Esophagus squamous epithelium (tissue), 5 donors: ENCODE measurements at regions of chr9 and their contacts with region 1.

Region 1: DNA sequence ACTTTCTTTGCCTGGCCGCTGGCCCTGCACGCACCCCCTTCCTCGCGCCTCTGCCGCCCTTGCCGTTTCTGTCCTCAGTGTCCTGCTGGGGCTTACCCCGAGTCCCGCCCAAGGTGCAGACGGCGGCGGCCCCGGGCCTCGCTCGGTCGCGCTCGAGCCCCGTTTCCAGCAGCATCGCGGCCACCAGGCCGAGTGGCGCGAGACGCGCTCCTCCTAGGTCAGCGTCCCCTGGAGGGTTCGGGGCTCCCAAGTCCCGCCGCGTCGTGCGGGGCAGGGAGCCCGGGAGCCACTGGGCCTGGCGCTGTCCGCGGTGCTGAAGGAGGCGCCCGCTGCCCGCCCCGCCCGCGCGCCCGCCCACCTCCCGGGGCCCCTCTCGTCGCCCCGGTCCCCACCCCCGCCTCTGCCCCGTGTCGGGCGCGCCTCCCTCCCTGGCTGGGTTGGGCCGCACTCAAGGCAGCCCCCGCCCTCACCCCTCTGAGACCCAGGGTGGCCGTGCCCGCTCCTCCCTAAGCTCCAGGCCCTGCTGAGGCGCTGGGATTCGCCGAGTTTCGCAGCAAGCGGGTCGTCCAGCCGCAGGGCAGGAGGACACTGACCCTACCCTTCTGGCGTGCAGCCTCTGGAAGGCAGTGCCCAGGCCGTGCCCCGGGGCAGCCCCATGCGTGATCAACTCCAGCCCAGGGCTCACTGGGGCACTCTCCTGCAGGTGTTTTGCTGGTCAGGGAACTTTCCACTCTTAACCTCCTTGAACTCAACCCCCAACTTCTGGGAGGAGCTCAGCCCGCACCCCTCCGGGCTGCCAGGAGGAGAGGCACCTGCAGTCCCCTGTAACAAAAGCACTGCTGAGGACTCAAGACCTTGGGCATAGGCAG is at the start of gene LHX3:
- DNase-seq: no peak
- H3K4me3 ChIP-seq: no peak within 1 kb of the TSS
- H3K27ac ChIP-seq: no peak within 1 kb of the TSS
- H3K4me1 ChIP-seq: peaks cover 0 to 23% (median 0%) of the 10 kb centered on the region in 3 donors
- H3K27me3 ChIP-seq: peaks cover 28 to 61% (median 41%) of the 10 kb centered on the region in 4 donors
- CTCF ChIP-seq: no peak
- POLR2A ChIP-seq: no peak
- total RNA-seq, gene LHX3: not detected

Region 2: DNA sequence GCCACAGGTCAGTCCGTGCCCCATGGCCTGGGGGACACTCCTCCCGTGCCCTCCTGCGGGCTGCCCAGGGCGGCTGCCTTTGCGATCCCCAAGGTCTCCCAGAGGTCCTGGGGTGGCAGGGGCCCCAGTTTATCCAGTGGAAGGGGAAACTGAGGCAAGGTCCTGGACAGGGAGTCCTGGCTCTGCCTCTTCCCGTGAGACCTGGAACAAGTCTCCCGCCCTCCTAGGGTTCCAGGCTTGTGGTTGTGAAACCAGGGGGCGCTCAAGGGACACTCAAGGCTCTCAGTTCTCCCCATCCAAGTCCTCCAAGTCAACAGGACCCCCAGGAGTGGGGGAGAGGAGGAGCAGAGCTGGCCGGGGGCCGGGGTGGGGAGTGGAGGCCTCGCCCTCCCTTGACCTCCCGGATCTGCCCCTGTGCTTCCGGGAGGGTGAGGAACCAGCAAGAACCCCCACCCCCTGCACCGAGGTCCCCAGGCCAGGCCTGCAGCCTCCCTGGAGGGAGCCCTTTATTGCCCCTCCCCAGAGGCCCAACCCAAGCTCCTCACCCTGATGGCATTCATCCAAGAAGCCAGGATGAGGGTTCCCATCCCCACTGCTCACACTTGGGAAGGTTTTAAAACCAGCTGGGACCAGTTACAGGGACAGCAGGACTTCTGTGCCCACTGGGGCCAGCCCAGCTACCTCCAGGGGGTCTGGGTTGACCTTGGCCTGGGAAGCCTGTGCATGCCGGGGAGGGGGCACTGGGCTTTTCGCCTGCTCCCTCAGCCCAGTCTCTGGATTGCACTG is 61.7 kb before region 1 on chr9:
- intact Hi-C with region 1: loop called (anchors 10 kb)
- DNase-seq: no peak
- H3K4me3 ChIP-seq: no peak overlapping the region
- H3K27ac ChIP-seq: no peak overlapping the region
- H3K4me1 ChIP-seq: peaks cover 0 to 18% (median 0%) of the 10 kb centered on the region in 3 donors
- H3K27me3 ChIP-seq: peaks cover 0 to 91% (median 3%) of the 10 kb centered on the region in 4 donors
- CTCF ChIP-seq: peak in 2 of 6 experiments; percentile 12 to 25
- POLR2A ChIP-seq: no peak